Prostate gland (tissue), 2 donors: ENCODE measurements at regions of chr1 and their contacts with region 1.

Region 1: GRCh38 chr1:48498096-48498791 is 26.2 kb upstream of the SPATA6 start:
- DNase-seq: peak; percentile 80
- H3K4me3 ChIP-seq: no peak overlapping the region
- H3K27ac ChIP-seq: no peak overlapping the region
- H3K4me1 ChIP-seq: no peaks in the 10 kb centered on the region
- H3K27me3 ChIP-seq: no peaks in the 10 kb centered on the region
- CTCF ChIP-seq: peak; percentile 78 to 92 (median 84)
- POLR2A ChIP-seq: no peak

Region 2: DNA sequence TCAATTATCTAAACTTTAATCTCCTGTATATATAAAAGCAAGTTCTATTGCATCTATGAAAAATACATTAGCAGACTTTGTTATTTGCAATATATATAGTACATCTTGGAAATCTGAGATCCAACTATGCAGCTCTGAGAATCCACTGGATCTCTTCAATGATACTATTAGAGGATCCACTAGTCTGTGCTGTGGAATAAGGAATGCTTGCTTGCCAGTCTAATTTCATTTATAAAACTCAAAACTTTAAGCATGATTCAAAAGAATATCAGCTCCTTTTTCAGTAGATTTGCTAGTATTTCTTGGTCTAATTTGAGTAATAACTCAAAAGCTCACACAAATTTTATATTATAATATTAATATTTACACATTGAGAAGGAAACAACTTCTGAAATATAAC is 141.3 kb before region 1 on chr1:
- intact Hi-C with region 1: loop called (anchors 10 kb)
- DNase-seq: no peak
- H3K4me3 ChIP-seq: no peak overlapping the region
- H3K27ac ChIP-seq: no peak overlapping the region
- H3K4me1 ChIP-seq: no peaks in the 10 kb centered on the region
- H3K27me3 ChIP-seq: no peaks in the 10 kb centered on the region
- CTCF ChIP-seq: peak in 2 of 4 experiments; percentile 12 to 23
- POLR2A ChIP-seq: no peak

Region 3: DNA sequence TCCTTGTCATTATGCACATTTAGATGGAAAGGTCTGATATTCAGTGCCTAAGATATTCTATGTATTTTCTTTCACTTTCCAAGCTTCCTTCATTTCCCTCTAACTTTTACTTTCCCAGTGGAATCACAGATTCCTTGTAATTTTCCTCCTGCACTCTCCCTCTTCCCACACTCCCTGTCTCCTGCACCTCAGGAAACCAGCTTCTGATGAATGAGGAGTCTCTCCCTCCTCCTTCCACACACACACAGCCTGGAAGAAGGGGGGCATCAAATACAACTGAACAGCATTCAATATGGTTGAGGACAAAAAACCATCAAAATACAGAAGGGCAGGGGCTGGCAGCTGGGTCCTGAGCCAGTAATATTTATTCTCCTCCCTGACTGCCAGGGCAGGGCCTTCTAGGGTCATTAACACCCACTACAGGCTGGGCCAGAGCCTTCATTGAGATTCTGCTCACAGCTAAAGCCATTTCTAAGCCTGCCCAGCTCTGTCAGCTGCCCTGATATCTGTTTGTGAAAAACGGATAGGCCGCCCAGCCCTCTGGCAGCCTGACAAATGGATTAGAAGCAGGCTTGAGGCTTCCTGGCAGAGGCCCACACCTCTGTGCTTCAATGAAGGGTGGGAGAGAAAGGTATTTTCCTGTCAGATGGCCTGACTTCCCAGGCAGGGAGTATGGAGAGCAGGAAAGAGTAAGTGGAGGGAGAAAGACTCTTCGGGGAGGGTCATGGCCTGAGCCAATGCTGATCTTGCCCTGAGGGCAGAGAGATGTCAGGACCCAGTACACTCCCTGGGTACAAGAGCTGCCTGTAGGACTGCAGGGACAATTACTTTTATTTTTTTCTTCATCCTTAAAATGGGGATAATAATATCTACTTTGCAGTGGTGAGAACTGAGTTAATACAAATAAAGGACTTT is 112.6 kb after region 1 on chr1:
- intact Hi-C with region 1: no loop called
- DNase-seq: peak; percentile 6
- H3K4me3 ChIP-seq: no peak overlapping the region
- H3K27ac ChIP-seq: no peak overlapping the region
- H3K4me1 ChIP-seq: no peaks in the 10 kb centered on the region
- H3K27me3 ChIP-seq: no peaks in the 10 kb centered on the region
- CTCF ChIP-seq: no peak
- POLR2A ChIP-seq: no peak